HAP-1 (cell line): ENCODE measurements at regions of chr15 and their contacts with region 1.

Region 1: GRCh38 chr15:26891448-26892181 is 24.8 kb downstream of the GABRA5 start:
- DNase-seq: peak; percentile 71 to 89
- H3K4me3 ChIP-seq: no peak overlapping the region
- H3K4me1 ChIP-seq: no peaks in the 10 kb centered on the region
- H3K27me3 ChIP-seq: no peaks in the 10 kb centered on the region

Region 2: GRCh38 chr15:27017168-27017809 is 125.7 kb after region 1 on chr15:
- in situ Hi-C with region 1: loop called (anchors 5 kb)
- DNase-seq: peak; percentile 63 to 85
- H3K4me3 ChIP-seq: no peak overlapping the region
- H3K4me1 ChIP-seq: no peaks in the 10 kb centered on the region
- H3K27me3 ChIP-seq: no peaks in the 10 kb centered on the region

Region 3: DNA sequence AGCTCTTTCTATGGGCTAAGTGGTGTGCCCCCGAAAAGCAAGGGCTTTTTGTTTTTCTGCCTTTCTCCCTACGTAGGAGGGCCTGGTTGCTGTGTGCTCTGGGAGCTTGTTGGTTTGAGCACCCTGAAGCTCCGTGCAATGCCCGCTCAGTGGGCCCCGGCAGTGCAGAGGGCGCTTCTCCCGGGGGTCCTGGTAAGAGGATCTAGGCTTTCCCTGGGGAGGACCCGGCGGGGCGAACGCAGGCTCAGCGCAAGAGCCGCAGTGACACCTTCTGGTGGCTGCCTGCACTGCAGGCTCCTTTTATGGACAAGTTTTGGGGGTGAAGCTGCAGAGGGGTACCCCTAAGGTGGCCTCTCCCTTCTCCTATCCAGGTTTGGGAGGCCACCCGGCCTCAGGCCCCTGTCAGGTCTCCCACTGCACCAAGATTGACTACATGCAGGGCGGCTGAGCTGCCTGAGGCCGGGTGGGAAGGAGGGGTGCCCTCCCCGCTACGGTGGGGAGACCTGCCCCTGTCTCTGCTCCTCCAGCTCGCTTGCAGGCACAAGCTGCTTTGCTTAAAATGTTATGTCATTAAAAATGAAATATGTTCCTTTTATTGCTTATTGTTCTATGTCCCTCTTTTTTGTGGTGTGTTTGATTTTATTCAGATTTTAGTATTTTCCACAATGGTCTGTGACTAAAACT is 467.3 kb after region 1 on chr15:
- in situ Hi-C with region 1: loop called (anchors 25 kb)
- DNase-seq: peak in 1 of 2 experiments; percentile 46
- H3K4me3 ChIP-seq: no peak overlapping the region
- H3K4me1 ChIP-seq: no peaks in the 10 kb centered on the region
- H3K27me3 ChIP-seq: no peaks in the 10 kb centered on the region